MCF 10A (cell line): ENCODE measurements at regions of chr7 and their contacts with region 1.

Region 1: GRCh38 chr7:30284298-30285066 is at the start of gene ZNRF2:
- DNase-seq: peak; percentile 99
- H3K4me3 Mint-ChIP-seq: peak within 1 kb of the TSS; percentile 76
- H3K27ac Mint-ChIP-seq: peak within 1 kb of the TSS; percentile 89
- H3K4me1 Mint-ChIP-seq: peaks cover 20% of the 10 kb centered on the region
- H3K27me3 Mint-ChIP-seq: no peaks in the 10 kb centered on the region
- CTCF ChIP-seq: peak; percentile 66
- total RNA-seq, gene ZNRF2: 9.8 and 10.2 TPM in 2 replicates

Region 2: GRCh38 chr7:30164567-30164966 is 119.9 kb before region 1 on chr7:
- CTCF ChIA-PET with region 1: interaction called, 5 read pairs
- POLR2A ChIA-PET with region 1: interaction called, 4 read pairs
- intact Hi-C with region 1: loop called (anchors 2 kb)
- DNase-seq: peak; percentile 82
- H3K4me3 Mint-ChIP-seq: no peak overlapping the region
- H3K27ac Mint-ChIP-seq: peak overlapping the region; percentile 92
- H3K4me1 Mint-ChIP-seq: peaks cover 42% of the 10 kb centered on the region
- H3K27me3 Mint-ChIP-seq: no peaks in the 10 kb centered on the region
- CTCF ChIP-seq: peak; percentile 63

Region 3: DNA sequence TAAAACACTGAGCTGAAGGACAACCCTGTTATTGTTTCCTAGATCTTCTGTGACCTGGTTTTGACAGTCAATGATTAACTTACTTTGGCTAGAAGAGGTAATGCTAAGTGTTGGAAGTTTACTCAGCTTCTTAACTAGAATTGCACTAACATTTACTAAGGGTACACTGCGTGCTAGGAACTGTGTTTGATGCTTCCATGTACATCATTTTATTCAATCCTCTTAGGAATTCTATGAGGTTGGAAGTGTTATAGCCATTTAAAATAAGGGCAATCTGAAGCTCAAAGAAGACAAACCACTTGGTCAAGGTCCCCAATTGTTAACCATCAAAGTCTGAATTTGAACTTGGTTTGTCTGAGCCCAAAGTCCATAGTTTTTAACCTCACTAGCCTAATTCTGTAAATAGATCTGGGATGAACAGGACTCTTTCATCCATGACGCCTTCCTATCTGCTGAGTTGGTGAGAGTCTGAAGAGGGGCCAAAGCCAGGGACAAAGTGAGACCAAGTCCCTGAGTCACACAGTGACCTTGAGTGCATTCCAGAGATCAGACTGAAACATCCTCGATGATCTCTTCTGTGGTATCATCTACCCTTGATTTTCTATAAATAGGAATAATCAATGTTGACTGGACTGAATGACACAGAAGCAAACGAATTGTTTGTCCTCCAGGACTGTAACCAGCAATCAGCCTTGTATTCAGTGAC is 29.3 kb before region 1 on chr7:
- CTCF ChIA-PET with region 1: no interaction called
- POLR2A ChIA-PET with region 1: no interaction called
- intact Hi-C with region 1: no loop called
- DNase-seq: no peak
- H3K4me3 Mint-ChIP-seq: no peak overlapping the region
- H3K27ac Mint-ChIP-seq: no peak overlapping the region
- H3K4me1 Mint-ChIP-seq: peaks cover 10% of the 10 kb centered on the region
- H3K27me3 Mint-ChIP-seq: no peaks in the 10 kb centered on the region
- CTCF ChIP-seq: no peak

Region 4: GRCh38 chr7:30322271-30323005 is 38.0 kb after region 1 on chr7:
- CTCF ChIA-PET with region 1: interaction called, 4 read pairs
- POLR2A ChIA-PET with region 1: interaction called, 52 read pairs
- intact Hi-C with region 1: loop called (anchors 2 kb)
- DNase-seq: peak; percentile 69
- H3K4me3 Mint-ChIP-seq: peak overlapping the region; percentile 59
- H3K27ac Mint-ChIP-seq: peak overlapping the region; percentile 79
- H3K4me1 Mint-ChIP-seq: peaks cover 50% of the 10 kb centered on the region
- H3K27me3 Mint-ChIP-seq: no peaks in the 10 kb centered on the region
- CTCF ChIP-seq: no peak

Region 5: DNA sequence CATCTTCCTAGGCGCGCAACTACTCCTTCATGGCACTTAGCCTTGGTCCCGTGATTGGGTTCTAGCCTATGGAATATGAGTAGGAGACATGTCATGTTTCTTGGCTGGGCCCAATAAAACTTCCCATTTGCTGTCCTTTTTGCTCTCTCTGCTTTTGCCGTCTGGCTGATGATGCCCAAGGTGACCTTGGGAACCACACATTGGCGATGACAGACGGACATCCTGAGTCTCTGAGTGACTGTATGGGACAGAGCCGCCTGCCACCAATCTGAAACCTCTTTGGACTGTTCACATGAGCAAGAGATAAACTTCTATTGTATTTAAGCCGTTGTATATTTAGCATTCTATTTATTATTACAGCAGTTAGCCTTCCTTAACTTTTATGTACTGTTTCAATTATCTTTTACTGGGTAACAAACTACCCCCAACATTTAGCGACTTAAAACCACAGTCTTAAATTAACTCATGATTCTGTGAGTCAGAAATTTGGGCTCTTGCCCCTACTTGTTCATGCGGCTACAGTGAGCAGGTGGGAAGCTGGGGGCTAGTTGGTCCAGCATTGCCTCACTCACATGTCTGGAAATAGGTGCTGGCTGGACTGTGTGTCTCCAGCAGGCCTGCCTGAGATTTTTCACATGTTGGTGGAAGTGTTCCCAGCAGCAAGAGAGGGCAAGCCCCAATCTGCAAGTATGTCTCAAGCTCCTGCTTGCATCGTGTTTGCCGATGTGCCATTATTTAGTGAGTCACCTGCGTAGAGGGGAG is 122.4 kb after region 1 on chr7:
- CTCF ChIA-PET with region 1: interaction called, 64 read pairs
- POLR2A ChIA-PET with region 1: interaction called, 48 read pairs
- intact Hi-C with region 1: no loop called
- DNase-seq: peak; percentile 96
- H3K4me3 Mint-ChIP-seq: peak overlapping the region; percentile 36
- H3K27ac Mint-ChIP-seq: peak overlapping the region; percentile 96
- H3K4me1 Mint-ChIP-seq: peaks cover 44% of the 10 kb centered on the region
- H3K27me3 Mint-ChIP-seq: no peaks in the 10 kb centered on the region
- CTCF ChIP-seq: no peak

Region 6: DNA sequence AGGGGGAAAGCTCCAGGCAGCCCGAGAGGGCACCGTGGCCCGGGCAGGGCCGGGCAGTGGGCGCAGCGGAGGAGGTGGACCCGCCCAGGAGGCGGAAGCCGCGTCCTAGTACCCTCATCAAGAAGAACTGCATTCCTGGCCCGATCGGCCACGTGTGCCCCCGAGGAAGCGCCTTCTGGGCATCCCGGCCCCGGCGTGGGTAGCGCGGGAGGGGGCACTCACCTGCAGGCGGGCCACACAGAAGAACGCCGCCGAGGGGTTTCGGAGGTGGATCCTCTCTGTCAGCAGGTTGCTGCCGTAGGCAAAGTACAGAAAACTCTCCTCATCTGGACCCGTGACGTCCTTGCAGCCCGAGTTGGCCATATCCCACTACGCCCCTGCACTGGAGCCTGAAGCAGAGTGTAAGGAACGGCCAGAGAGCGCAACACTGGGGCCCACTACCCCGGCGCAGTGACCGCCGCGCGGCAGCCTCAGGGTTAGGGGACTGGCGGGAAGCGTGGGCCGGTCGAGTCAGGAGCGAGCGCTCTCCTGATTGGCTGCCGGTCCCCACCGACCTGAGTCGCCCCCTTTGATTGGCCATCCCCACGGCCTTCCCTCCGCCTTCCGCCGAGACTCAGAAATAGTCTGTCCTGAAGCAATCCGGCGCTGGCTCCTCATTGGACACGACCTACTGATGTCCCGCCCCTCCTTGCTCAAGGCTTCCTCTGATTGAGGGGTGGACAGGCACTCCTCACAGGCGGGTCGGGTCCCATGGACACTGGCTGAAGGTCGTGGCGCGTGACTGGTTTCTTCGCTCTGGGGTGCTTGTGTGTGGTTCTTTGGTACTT is 220.1 kb after region 1 on chr7 and contains the start of gene GGCT:
- CTCF ChIA-PET with region 1: no interaction called
- POLR2A ChIA-PET with region 1: no interaction called
- intact Hi-C with region 1: loop called (anchors 5 kb)
- DNase-seq: peak; percentile 99
- H3K4me3 Mint-ChIP-seq: peak within 1 kb of the TSS; percentile 83
- H3K27ac Mint-ChIP-seq: peak within 1 kb of the TSS; percentile 77
- H3K4me1 Mint-ChIP-seq: peaks cover 30% of the 10 kb centered on the region
- H3K27me3 Mint-ChIP-seq: no peaks in the 10 kb centered on the region
- CTCF ChIP-seq: no peak
- total RNA-seq, gene GGCT: 48.3 and 64.8 TPM in 2 replicates